Left cardiac atrium (tissue), 4 donors: ENCODE measurements at regions of chr3 and their contacts with region 1.

Region 1: DNA sequence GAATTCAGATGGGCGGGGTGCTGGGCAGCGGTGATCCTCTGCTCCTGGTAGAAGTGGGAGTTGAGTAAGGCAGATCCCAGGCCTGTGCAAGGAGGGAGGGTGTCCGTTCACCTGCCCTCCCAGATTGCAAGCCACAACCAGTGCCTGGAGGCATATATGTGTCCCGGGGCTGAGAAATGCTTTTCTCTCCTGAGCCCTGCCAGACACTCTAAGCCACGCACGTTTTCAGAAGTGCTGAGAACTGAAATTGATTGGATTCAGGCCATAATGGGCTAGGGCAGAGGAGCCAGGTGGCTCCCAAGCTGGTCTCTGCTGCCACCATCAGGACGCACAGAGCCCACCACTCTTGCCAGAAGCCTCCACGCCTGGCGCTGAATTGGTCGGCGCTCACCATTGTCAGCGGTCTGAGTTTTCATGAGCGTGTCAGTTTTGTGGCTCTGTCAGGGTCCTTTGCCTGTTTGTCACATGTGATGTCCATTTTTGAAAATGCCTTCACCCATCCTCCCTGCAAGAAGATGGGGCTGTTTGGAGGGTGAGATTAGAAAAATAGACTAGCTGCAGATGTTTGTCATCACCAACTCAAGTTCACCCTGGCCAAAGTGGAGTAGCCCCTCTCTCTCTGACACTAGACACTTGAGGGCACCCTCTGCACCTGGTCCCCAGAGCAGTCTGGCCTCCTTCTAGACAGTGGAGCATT is 15.4 kb upstream of the BFSP2 start:
- DNase-seq: peak; percentile 73
- ATAC-seq: peak; percentile 91 to 92

Region 2: DNA sequence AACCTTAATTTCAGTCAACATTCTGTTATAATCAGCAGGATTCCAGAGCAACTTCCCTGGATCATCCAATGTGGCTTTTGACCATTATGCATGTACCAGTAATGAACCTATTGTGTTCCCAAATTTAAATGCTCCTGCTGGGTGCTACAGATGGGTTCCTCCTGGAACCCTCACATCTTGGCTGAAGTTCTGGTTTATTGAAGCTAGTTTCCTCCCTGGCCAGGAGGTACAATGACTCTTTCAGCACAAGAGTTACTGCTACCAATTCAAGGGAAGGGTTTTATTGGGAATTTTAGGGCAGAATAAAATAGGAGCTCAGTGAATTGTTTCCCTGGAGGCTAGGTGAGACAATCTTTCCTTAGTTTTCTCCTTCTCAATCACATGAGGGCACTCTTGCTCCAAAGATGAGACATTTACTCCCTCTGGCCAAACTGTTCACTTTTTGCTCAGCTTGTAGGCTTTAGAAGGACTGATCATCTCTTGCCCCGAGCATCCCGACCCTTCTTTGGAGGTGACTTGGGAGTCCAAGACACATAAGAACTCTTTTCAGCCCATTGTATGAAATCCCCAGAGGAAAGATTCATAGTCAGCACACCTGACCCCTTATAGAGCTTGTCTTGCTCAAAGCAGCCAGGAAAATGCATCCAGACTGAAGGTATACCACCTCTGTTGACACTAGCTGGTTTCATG is 653.4 kb before region 1 on chr3:
- intact Hi-C with region 1: loop called (anchors 2 to 5 kb)
- DNase-seq: no peak
- ATAC-seq: peak; percentile 85 to 86

Region 3: DNA sequence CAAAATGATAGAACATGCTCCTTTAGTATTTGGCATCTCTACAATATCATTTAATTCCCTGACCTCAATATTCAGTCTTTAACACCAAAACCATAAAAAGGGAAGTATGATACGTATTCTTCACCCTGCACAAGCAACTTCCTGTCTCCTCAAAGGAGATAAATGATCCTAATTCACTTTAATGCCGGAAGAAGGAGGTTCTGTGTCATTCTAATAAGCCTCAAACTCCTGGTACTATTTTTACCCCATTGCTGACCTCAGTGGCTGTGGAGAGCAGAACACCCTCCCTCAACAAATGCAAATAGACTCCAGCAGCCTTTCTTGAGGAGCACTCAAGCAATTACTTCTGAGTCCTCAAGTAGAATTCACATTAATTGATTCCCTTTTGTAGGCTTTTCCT is 173.0 kb before region 1 on chr3:
- intact Hi-C with region 1: no loop called
- DNase-seq: no peak
- ATAC-seq: peak in 1 of 2 donors; percentile 65

Region 4: DNA sequence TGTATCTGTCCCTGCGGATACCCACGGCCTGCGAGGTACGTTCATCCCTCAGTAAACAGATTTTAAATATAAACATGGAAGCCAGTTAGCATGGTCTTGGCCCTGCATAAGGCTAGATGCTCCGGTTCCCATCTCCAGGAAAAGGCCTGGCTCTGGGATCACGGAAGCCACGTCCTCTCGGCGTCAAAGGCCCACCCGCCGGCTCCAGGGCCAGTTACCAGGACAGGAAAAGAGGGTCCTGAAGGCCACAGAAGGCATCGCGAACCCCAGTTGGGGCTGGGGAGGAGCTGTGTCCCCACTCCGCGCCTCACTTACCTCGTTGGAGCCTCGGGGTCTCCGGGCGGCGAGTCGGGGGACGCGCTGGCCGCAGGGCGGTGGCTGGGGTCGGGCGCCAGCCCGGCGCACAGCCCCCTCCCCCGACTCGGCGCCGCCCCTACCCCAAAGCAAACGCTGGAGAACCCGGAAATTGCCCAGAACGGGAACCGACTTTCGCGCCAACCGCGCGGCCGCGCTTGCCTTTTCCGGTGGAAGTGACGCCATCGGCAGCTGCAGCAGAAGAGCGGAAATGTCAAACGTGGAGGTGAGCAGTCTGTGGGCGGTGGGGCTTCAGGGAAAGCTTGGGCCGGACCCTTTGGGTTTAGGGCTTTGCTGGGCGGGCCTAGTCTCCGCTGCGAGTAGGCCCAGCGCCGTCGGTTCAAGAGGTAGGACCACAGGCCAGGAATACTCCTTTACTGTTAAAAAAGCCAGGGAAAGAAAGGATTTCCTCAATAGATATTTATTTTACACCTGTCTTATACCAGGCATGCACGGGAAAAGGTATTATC is 277.2 kb after region 1 on chr3 and contains the start of gene TOPBP1:
- intact Hi-C with region 1: no loop called
- DNase-seq: peak; percentile 86
- ATAC-seq: peak; percentile 95 to 96
- total RNA-seq, gene TOPBP1: 12.0 to 12.4 TPM